HEK293T (cell line): ENCODE measurements at regions of chrX and their contacts with region 1.

Region 1: GRCh38 chrX:153554519-153555167 is 37.2 kb downstream of the ATP2B3 start:
- DNase-seq: peak; percentile 81

Region 2: GRCh38 chrX:153539171-153539978 is 15.3 kb before region 1 on chrX:
- CTCF ChIA-PET with region 1: interaction called, 10 read pairs
- POLR2A ChIA-PET with region 1: no interaction called
- DNase-seq: peak; percentile 89

Region 3: DNA sequence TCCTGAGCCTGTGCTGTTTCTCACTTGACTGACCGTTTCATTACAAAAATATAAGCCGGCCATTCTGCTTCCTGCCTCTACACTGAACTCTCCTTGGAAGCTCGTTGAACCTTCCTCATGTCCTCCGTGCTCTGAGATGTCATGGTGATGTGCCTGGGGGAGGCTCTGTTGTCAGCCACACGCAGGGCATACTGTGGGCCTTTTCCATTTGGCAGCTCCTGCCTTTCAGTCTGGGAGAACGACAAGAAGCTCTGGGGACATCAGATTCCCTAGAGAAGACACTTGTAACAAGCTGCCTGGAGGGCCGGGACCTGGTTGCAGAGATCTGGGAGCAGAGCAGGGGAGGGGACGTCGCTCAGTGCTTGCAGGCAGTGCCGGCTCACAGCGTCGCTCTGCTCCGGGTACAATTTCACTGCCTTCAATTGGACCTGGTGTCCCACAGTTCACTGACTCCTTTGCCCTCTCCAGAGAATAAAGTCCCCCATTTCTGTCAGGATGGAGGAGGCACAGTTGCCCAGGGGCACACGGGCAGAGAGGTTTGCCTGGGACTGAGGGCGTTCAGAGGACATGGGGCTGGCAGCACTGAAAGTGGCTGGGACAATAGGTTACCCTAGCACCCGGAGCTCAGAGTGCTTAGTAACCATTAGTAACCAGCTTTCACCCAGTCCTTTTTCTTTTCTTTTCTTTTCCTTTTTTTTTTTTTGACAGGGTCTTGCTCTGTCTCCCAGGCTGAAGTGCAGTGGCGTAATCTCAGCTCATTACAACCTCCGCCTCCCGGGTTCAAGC is 562.0 kb after region 1 on chrX:
- CTCF ChIA-PET with region 1: no interaction called
- POLR2A ChIA-PET with region 1: no interaction called
- DNase-seq: no peak